ENCODE measurements at regions of chr2 and their contacts with region 1.

Region 1: GRCh38 chr2:37795938-37796337 is 124.5 kb upstream of the CDC42EP3 start:
- DNase-seq: peak; percentile 87
- H3K4me3 ChIP-seq: no peak overlapping the region
- CTCF ChIP-seq: no peak

Region 2: DNA sequence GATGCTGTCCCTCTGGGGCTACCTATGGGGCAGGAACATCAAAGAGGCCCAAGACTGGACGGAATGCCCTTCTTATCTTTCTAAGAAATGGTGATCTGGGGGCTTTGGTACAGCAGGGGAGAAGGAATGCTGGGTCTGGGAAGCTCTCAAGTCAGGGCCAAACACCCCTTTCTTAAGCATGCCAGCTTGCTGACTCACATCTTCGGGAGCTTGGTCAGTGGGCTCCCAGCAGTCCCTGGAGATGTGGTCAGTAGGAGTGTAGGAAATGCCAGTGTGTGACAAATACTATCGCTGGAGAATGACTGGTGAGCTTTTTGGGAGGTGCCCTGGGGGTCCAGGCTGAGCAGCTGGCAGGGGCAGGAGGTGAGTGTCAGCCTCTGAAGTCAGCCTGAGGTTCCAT is 19.5 kb before region 1 on chr2:
- CTCF ChIA-PET with region 1: interaction called, 16 read pairs
- POLR2A ChIA-PET with region 1: interaction called, 24 read pairs
- DNase-seq: peak; percentile 87
- H3K4me3 ChIP-seq: no peak overlapping the region
- CTCF ChIP-seq: no peak

Region 3: DNA sequence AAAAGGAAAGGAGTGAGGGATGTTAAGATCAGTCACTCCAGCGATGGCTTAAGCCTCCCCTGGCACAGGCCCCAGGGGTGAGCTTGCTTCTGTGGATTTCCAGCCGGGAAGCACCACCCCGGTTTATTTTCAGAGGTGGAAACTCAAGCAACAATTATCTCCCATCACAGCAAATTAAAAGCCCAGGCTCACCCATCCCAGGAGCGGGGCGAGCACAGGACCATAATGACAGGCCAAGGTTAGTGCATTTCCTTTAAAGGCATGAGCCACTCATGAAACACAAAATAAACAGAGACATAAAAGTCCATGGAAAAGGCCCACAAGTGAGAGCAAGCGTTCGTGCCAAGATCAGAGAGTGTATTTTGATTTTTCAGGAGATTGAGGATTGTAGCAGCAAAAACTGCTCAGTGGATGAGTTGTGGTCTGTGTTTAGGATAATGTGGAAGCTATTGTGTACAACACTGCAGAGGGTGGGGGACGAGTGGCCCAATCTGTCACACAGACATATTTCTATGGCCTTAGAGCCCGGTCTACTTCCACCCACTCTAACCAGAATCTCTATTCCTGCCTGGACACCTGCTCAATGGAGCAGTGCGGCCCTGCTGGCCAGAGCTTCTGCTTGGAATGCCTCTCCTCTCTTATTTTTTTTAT is 13.1 kb before region 1 on chr2:
- CTCF ChIA-PET with region 1: interaction called, 22 read pairs
- POLR2A ChIA-PET with region 1: interaction called, 24 read pairs
- DNase-seq: no peak
- H3K4me3 ChIP-seq: no peak overlapping the region
- CTCF ChIP-seq: no peak

Region 4: DNA sequence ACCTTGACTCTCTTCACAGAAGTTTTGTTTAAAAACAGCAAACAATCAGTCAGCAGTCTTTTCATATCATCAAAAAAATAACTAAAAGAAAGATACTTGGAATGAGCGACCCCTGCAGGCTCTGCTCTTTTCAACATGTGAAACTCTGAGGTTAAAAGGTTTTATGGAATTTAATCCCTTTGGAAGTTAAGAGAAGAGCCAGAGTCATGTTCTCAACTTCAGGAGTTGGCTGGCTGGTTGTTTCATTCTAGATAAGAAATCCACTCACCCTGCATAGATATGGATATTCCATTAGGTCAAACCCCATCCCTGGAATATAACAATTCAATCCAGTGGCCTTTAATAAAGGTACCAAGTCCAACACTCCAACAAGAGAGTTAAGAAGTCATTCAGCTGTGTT is 13.6 kb after region 1 on chr2:
- CTCF ChIA-PET with region 1: interaction called, 14 read pairs
- POLR2A ChIA-PET with region 1: no interaction called
- DNase-seq: no peak
- H3K4me3 ChIP-seq: no peak overlapping the region
- CTCF ChIP-seq: peak; percentile 35

Measured in AG04449 (cell line).